Activated CD4-positive, alpha-beta memory T cell treated with anti-CD3 and anti-CD28 coated beads, Interleukin-2, amount 10 ng/mL, durations not matched to agents 7 days and 5 days (primary cell): ENCODE measurements at regions of chr11 and their contacts with region 1.

Region 1: DNA sequence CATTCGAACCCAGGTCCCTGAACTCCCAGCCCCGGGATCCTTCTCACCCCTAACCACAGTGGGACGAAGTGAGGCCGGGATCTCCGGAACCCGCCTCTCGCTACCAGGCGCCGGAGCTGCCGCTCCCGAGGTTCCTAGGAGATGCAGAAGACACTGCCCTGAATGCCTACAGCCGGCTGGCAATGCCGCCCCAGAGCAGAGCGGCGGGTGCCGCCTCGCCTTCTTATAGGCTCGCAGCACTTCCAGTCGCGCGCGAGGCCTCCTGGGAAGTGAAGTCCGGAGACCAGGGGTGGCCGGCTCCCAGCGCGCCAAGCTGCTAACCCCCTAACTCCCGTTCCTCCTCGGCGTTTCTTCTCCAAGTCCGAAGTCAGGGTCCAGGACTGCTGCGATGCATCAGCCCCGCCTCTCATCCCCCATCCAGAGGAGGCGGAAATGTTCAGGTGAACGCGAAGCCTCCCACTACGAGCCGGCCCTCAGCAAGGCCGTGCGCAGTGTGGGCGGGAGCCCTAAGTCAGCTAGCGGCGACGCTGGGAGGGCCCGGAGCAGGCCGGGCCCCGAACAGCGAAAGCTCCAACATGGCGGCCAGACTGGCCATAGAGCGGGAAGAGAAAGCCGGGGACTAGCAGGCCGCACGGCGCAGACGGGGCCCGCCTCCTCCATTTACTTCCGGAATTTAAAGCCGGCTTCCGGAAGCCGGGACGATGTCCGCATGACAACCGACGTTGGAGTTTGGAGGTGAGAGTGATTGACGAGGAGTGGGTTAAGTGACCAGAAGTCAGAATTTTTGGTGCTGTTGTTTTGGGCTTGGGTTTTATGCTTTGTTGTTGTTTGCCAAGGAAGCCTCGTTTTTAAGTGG is at the starts of genes CYB561A3 and TMEM138:
- DNase-seq: peak; percentile 93
- H3K4me3 Mint-ChIP-seq: peak within 1 kb of the TSS; percentile 98
- H3K27ac Mint-ChIP-seq: peak within 1 kb of the TSS; percentile 97
- H3K4me1 Mint-ChIP-seq: peaks cover 43% of the 10 kb centered on the region
- H3K27me3 Mint-ChIP-seq: no peaks in the 10 kb centered on the region
- total RNA-seq, gene CYB561A3: 36.0 to 38.6 TPM
- total RNA-seq, gene TMEM138: 45.5 to 50.0 TPM

Region 2: DNA sequence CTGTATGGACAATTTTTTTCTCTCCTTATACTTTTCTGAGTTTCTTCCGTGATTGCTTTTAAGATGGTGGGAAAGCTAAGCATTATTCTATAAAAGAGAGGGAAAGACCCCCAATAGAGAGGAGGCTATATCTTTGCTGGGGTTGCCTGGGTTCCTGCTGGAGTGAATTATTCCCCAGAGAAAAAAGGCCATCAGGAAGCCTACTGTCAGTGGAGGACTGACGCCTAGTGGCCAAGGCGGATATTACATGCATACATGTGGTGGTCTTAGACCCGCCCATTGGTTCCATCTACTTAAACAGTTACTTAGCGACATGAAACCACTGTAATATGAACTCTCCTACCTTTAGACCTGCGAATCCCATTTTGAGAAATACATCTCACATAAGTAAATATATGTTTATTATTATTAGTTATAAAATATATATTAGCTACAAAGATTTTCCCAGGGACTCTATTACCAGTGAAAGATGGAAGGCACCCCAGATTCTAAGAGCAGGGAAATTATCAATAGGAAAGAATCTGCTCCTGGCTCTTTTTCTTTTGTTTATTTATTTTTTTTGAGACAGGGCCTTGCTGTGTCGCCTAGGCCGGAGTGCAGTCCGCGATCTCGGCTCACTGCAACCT is 174.3 kb before region 1 on chr11:
- CTCF ChIA-PET with region 1: no interaction called
- POLR2A ChIA-PET with region 1: no interaction called
- DNase-seq: peak; percentile 80
- H3K4me3 Mint-ChIP-seq: no peak overlapping the region
- H3K27ac Mint-ChIP-seq: no peak overlapping the region
- H3K4me1 Mint-ChIP-seq: peaks cover 4% of the 10 kb centered on the region
- H3K27me3 Mint-ChIP-seq: peaks cover 10% of the 10 kb centered on the region

Region 3: GRCh38 chr11:61347916-61348461 is 13.9 kb before region 1 on chr11:
- CTCF ChIA-PET with region 1: no interaction called
- POLR2A ChIA-PET with region 1: interaction called, 30 read pairs
- DNase-seq: no peak
- H3K4me3 Mint-ChIP-seq: no peak overlapping the region
- H3K27ac Mint-ChIP-seq: no peak overlapping the region
- H3K4me1 Mint-ChIP-seq: peaks cover 2% of the 10 kb centered on the region
- H3K27me3 Mint-ChIP-seq: no peaks in the 10 kb centered on the region

Region 4: GRCh38 chr11:61378713-61379313 is 16.9 kb after region 1 on chr11:
- CTCF ChIA-PET with region 1: interaction called, 66 read pairs
- POLR2A ChIA-PET with region 1: interaction called, 19 read pairs
- DNase-seq: no peak
- H3K4me3 Mint-ChIP-seq: no peak overlapping the region
- H3K27ac Mint-ChIP-seq: no peak overlapping the region
- H3K4me1 Mint-ChIP-seq: no peaks in the 10 kb centered on the region
- H3K27me3 Mint-ChIP-seq: no peaks in the 10 kb centered on the region

Region 5: GRCh38 chr11:61384271-61385242 is 22.6 kb after region 1 on chr11:
- CTCF ChIA-PET with region 1: interaction called, 66 read pairs
- POLR2A ChIA-PET with region 1: interaction called, 50 read pairs
- DNase-seq: no peak
- H3K4me3 Mint-ChIP-seq: no peak overlapping the region
- H3K27ac Mint-ChIP-seq: no peak overlapping the region
- H3K4me1 Mint-ChIP-seq: peaks cover 8% of the 10 kb centered on the region
- H3K27me3 Mint-ChIP-seq: no peaks in the 10 kb centered on the region

Region 6: GRCh38 chr11:61392981-61393595 is 31.2 kb after region 1 on chr11:
- CTCF ChIA-PET with region 1: interaction called, 4 read pairs
- POLR2A ChIA-PET with region 1: interaction called, 50 read pairs
- DNase-seq: no peak
- H3K4me3 Mint-ChIP-seq: peak overlapping the region; percentile 80
- H3K27ac Mint-ChIP-seq: peak overlapping the region; percentile 85
- H3K4me1 Mint-ChIP-seq: peaks cover 25% of the 10 kb centered on the region
- H3K27me3 Mint-ChIP-seq: no peaks in the 10 kb centered on the region

Region 7: DNA sequence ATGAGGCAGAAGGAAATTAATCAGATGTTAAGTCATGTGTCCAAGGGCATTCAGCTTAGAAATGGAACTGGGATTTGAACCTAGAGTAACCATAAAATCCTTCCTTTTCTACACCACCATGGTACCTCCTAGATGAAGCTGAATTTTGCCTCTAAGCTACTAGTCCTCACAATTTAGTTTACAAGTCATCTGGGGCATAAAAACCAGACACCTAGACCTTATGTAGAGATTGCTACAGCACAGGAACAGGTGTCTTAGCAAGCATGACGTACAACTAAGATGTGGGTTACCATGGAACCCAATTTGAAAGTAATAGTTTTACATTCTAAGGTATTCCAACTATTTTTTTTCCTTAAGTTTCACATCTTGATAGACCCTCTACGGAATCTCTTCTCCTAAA is 39.6 kb after region 1 on chr11:
- CTCF ChIA-PET with region 1: no interaction called
- POLR2A ChIA-PET with region 1: interaction called, 10 read pairs
- DNase-seq: no peak
- H3K4me3 Mint-ChIP-seq: no peak overlapping the region
- H3K27ac Mint-ChIP-seq: no peak overlapping the region
- H3K4me1 Mint-ChIP-seq: no peaks in the 10 kb centered on the region
- H3K27me3 Mint-ChIP-seq: no peaks in the 10 kb centered on the region

Region 8: GRCh38 chr11:61429691-61430582 is 68.0 kb after region 1 on chr11 and contains the starts of genes CPSF7 and SDHAF2:
- CTCF ChIA-PET with region 1: interaction called, 8 read pairs
- POLR2A ChIA-PET with region 1: interaction called, 51 read pairs
- DNase-seq: peak; percentile 98
- H3K4me3 Mint-ChIP-seq: peak within 1 kb of the TSS; percentile 99
- H3K27ac Mint-ChIP-seq: peak within 1 kb of the TSS; percentile 99
- H3K4me1 Mint-ChIP-seq: peaks cover 65% of the 10 kb centered on the region
- H3K27me3 Mint-ChIP-seq: no peaks in the 10 kb centered on the region
- total RNA-seq, gene CPSF7: 89.6 to 90.2 TPM
- total RNA-seq, gene SDHAF2: 47.3 to 47.5 TPM